ENCODE measurements at regions of chr11 and their contacts with region 1.

Region 1: GRCh38 chr11:112795142-112795815 is 165.9 kb upstream of the NCAM1 start:
- DNase-seq: peak; percentile 66
- CTCF ChIP-seq: peak; percentile 64

Region 2: GRCh38 chr11:112280268-112281126 is 514.8 kb before region 1 on chr11:
- in situ Hi-C with region 1: loop called (anchors 10 kb)
- DNase-seq: peak; percentile 83
- CTCF ChIP-seq: peak; percentile 77

Region 3: DNA sequence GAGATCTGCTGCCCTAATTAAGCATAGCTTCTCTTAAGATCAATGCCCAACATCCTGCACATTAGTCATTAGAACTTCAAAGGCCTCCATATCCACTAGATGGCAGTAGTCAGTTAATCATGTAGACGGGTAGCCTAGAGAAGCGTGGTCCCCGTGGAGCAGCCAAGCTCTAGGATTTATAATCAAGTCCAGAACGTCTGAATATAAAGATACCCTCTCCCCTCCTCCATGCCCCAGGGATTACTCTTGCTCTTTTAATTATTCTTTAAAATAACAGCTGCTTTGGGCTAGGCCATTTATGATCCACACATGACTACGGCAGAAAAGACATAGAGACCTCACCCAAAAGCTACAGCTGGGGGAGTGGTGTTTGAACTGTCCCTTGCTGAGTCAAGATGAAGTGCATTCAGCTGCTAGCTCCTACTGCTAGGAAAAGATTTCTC is 207.0 kb before region 1 on chr11:
- in situ Hi-C with region 1: loop called (anchors 10 kb)
- DNase-seq: peak; percentile 43
- CTCF ChIP-seq: peak; percentile 74

Region 4: DNA sequence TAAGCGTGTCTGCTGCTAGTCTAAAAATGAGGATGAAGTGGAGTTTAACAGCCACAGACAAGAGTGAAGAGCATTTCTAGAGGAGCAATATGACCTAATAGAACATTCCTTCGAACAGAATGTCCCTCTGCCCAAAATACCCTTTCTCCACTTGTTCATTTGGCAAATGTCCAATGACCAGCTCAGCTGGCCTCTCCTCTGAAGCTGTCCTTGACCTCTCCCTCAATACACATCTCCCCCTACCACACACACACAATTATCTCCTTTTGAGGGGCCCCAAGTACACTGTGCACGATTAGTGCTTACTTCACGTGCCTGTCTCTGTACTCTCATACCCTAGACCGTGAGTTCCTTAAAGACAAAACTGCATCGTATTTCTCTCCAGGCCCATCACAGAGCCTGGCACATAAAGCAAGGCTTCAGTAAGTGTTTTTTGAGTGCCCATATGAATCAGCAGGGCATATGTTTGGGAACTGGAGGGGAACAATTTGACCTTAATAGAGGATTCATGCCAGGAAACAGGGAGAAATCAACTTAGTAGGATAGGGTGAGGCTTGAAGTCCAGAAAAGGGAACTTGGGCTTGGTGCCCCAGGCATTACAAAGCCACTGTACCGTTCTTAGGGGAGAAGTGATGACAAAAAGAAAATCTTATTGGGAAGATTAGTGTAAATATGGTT is 147.8 kb after region 1 on chr11:
- in situ Hi-C with region 1: no loop called
- DNase-seq: no peak
- CTCF ChIP-seq: no peak

Region 5: GRCh38 chr11:113289431-113290187 is 494.3 kb after region 1 on chr11:
- in situ Hi-C with region 1: loop called (anchors 25 kb)
- DNase-seq: peak; percentile 79
- CTCF ChIP-seq: peak; percentile 84